ENCODE measurements at regions of chr2 and their contacts with region 1.

Region 1: GRCh38 chr2:165015052-165015642 is 59.8 kb upstream of the SLC38A11 start:
- DNase-seq: peak; percentile 70
- ATAC-seq: peak; percentile 44
- H3K4me3 ChIP-seq: no peak overlapping the region
- H3K4me3 Mint-ChIP-seq: no peak overlapping the region
- H3K27ac ChIP-seq: no peak overlapping the region
- H3K27ac Mint-ChIP-seq: peak overlapping the region; percentile 73
- H3K4me1 ChIP-seq: peaks cover 38 to 43% of the 10 kb centered on the region in 2 donors
- H3K4me1 Mint-ChIP-seq: peaks cover 10% of the 10 kb centered on the region
- H3K27me3 ChIP-seq: no peaks in the 10 kb centered on the region
- H3K27me3 Mint-ChIP-seq: peaks cover under 1% of the 10 kb centered on the region
- CTCF ChIP-seq: peak; percentile 84

Region 2: DNA sequence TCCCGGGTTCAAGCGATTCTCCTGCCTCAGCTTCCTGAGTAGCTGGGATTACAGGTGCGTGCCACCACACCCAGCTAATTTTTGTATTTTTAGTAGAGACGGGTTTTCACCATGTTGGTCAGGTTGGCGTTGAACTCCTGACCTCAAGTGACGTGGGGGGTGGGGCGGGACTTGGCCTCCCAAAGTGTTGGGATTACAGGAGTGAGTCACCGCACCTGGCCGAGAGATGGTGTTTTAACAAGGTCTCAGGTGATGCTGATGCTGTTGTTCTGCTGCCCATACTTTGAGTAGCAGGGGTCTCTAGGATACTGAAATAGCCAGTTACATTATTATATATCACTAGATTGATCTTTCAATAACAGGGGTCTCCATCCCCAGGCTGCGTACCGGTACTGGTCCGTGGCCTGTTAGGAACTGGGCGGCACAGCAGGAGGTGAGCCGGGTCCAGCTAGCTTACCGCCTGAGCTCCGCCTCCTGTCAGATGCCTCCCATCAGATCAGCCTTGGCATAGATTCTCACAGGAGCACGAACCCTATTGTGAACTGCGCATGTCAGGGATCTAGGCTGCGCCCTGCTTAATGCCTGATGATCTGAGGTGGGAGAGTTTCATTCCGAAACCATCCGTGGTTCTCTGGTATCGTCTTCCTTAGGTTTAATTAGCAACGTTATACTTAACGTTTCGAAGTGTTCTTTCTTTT is 11.6 kb before region 1 on chr2:
- CTCF ChIA-PET with region 1: interaction called, 14 read pairs
- POLR2A ChIA-PET with region 1: no interaction called
- intact Hi-C with region 1: loop called (anchors 2 kb)
- DNase-seq: no peak
- ATAC-seq: no peak
- H3K4me3 ChIP-seq: no peak overlapping the region
- H3K4me3 Mint-ChIP-seq: no peak overlapping the region
- H3K27ac ChIP-seq: no peak overlapping the region
- H3K27ac Mint-ChIP-seq: no peak overlapping the region
- H3K4me1 ChIP-seq: no peaks in the 10 kb centered on the region
- H3K4me1 Mint-ChIP-seq: no peaks in the 10 kb centered on the region
- H3K27me3 ChIP-seq: peaks cover 0 to 4% (median 0%) of the 10 kb centered on the region in 4 experiments
- H3K27me3 Mint-ChIP-seq: peaks cover 16% of the 10 kb centered on the region
- CTCF ChIP-seq: no peak

Region 3: GRCh38 chr2:165055082-165055851 is 40.1 kb after region 1 on chr2:
- CTCF ChIA-PET with region 1: no interaction called
- POLR2A ChIA-PET with region 1: no interaction called
- intact Hi-C with region 1: no loop called
- DNase-seq: no peak
- ATAC-seq: no peak
- H3K4me3 ChIP-seq: no peak overlapping the region
- H3K4me3 Mint-ChIP-seq: no peak overlapping the region
- H3K27ac ChIP-seq: no peak overlapping the region
- H3K27ac Mint-ChIP-seq: no peak overlapping the region
- H3K4me1 ChIP-seq: no peaks in the 10 kb centered on the region
- H3K4me1 Mint-ChIP-seq: no peaks in the 10 kb centered on the region
- H3K27me3 ChIP-seq: no peaks in the 10 kb centered on the region
- H3K27me3 Mint-ChIP-seq: no peaks in the 10 kb centered on the region
- CTCF ChIP-seq: no peak

Region 4: DNA sequence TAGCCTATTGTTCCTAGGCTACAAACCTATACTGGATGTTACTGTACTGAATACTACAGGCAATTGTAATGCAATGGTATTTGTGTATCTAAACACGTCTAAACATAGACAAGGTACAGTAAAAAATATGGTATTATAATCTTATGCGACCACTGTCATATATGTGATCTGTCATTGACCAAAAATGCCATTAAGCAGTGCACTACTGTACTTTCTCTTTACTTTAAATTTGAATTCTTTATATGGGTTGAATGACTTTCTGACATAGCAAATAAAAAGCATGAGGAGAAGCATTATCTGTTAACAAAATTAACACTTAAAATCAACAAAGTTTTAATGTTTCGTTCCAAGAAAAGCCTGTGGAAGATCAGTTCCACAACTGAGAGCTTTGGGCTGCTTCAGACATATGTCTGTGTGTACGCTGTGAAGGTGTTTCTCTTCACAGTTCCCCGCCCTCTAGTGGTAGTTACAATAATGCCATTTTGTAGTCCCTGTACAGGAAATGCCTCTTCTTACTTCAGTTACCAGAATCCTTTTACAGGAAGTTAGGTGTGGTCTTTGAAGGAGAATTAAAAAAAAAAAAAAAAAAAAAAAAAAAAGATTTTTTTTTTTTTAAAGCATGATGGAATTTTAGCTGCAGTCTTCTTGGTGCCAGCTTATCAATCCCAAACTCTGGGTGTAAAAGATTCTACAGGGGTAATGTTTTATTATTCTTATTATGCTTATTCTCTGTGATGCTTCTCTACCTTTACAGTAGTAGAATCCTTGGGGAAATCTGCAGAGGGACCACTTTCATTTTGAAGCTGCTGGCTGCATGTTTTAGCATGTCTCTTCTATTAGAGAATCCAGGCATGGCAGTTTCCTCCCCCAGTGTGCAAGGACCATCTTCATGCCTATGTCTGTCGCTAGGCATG is 278.6 kb after region 1 on chr2:
- CTCF ChIA-PET with region 1: interaction called, 6 read pairs
- POLR2A ChIA-PET with region 1: no interaction called
- intact Hi-C with region 1: loop called (anchors 1 kb)
- DNase-seq: peak; percentile 90
- ATAC-seq: peak; percentile 100
- H3K4me3 ChIP-seq: no peak overlapping the region
- H3K4me3 Mint-ChIP-seq: no peak overlapping the region
- H3K27ac ChIP-seq: no peak overlapping the region
- H3K27ac Mint-ChIP-seq: no peak overlapping the region
- H3K4me1 ChIP-seq: peaks cover 3 to 7% of the 10 kb centered on the region in 2 donors
- H3K4me1 Mint-ChIP-seq: peaks cover 3% of the 10 kb centered on the region
- H3K27me3 ChIP-seq: no peaks in the 10 kb centered on the region
- H3K27me3 Mint-ChIP-seq: peaks cover 9% of the 10 kb centered on the region
- CTCF ChIP-seq: peak; percentile 84